ENCODE measurements at regions of chr5 and their contacts with region 1.

Region 1: GRCh38 chr5:72319976-72320752 is at the starts of genes MRPS27 and PTCD2:
- DNase-seq: peak; percentile 86
- ATAC-seq: peak; percentile 99
- H3K4me3 Mint-ChIP-seq: peak within 1 kb of the TSS; percentile 87
- H3K27ac Mint-ChIP-seq: peak within 1 kb of the TSS; percentile 84
- H3K4me1 Mint-ChIP-seq: peaks cover 24% of the 10 kb centered on the region
- H3K27me3 Mint-ChIP-seq: no peaks in the 10 kb centered on the region
- total RNA-seq, gene MRPS27: 39.0 to 43.8 TPM
- total RNA-seq, gene PTCD2: 8.9 to 9.8 TPM

Region 2: GRCh38 chr5:72307968-72308852 is 12.0 kb before region 1 on chr5:
- POLR2A ChIA-PET with region 1: interaction called, 52 read pairs
- DNase-seq: peak; percentile 96
- ATAC-seq: peak; percentile 97
- H3K4me3 Mint-ChIP-seq: peak overlapping the region; percentile 80
- H3K27ac Mint-ChIP-seq: peak overlapping the region; percentile 90
- H3K4me1 Mint-ChIP-seq: peaks cover 24% of the 10 kb centered on the region
- H3K27me3 Mint-ChIP-seq: no peaks in the 10 kb centered on the region

Measured in activated naive CD8-positive, alpha-beta T cell treated with anti-CD3 and anti-CD28 coated beads, Interleukin-2, amount 10 ng/mL, durations not matched to agents 7 days and 5 days (primary cell).